Heart left ventricle (tissue), 16 donors: ENCODE measurements at regions of chr6 and their contacts with region 1.

Region 1: DNA sequence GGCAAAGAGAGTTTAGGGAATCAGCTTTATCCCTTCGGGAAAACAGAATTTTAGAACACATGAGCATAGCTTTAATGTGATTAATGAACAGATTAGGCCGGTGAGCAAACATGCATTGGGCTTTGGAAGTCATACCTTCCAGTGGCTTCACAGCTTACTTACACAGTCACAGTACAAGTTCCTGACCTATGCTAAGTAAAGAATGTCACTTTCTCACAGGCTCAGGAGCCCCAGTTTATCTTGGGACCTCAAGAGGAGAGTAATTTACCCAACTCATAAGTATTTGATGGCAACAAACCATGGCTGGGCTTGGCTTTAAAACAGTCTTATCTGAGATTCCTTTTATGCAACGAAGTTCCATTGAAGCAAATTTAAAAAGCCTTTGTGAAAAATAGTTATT is 195.9 kb downstream of the AKAP7 start:
- DNase-seq: no peak
- ATAC-seq: no peak
- H3K4me3 ChIP-seq: no peak overlapping the region
- H3K27ac ChIP-seq: no peak overlapping the region
- H3K4me1 ChIP-seq: no peaks in the 10 kb centered on the region
- H3K27me3 ChIP-seq: no peaks in the 10 kb centered on the region
- CTCF ChIP-seq: no peak
- POLR2A ChIP-seq: no peak

Region 2: GRCh38 chr6:131231103-131231502 is 100.0 kb before region 1 on chr6:
- intact Hi-C with region 1: no loop called
- DNase-seq: no peak
- ATAC-seq: no peak
- H3K4me3 ChIP-seq: no peak overlapping the region
- H3K27ac ChIP-seq: no peak overlapping the region
- H3K4me1 ChIP-seq: no peaks in the 10 kb centered on the region
- H3K27me3 ChIP-seq: no peaks in the 10 kb centered on the region
- CTCF ChIP-seq: no peak
- POLR2A ChIP-seq: no peak

Region 3: GRCh38 chr6:131451321-131452144 is 120.4 kb after region 1 on chr6:
- intact Hi-C with region 1: loop called in 1 of 10 experiments (anchors 10 kb)
- DNase-seq: no peak
- ATAC-seq: no peak
- H3K4me3 ChIP-seq: no peak overlapping the region
- H3K27ac ChIP-seq: no peak overlapping the region
- H3K4me1 ChIP-seq: no peaks in the 10 kb centered on the region
- H3K27me3 ChIP-seq: no peaks in the 10 kb centered on the region
- CTCF ChIP-seq: no peak
- POLR2A ChIP-seq: no peak

Region 4: GRCh38 chr6:131532580-131533039 is 201.5 kb after region 1 on chr6:
- intact Hi-C with region 1: no loop called
- DNase-seq: no peak
- ATAC-seq: no peak
- H3K4me3 ChIP-seq: no peak overlapping the region
- H3K27ac ChIP-seq: no peak overlapping the region
- H3K4me1 ChIP-seq: no peaks in the 10 kb centered on the region
- H3K27me3 ChIP-seq: no peaks in the 10 kb centered on the region
- CTCF ChIP-seq: no peak
- POLR2A ChIP-seq: no peak

Region 5: DNA sequence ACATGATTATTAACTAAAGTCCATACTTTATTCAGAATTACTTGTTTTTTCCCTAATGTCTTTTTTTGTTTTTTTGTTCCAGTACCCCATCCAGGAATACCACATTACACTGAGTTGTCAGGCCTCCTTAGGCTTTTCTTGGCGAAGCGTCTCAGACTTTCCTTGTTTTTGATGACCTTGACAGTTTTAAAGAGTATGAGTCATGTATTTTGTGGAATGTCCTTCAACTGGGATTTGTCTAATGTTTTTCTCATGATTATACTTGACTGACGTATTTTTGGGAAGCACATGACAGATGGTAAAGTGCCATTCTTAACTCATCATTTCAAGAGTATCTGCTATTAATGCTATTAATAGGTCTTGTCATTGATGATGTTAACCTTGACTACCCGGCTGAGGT is 500.2 kb after region 1 on chr6:
- intact Hi-C with region 1: no loop called
- DNase-seq: no peak
- ATAC-seq: peak in 1 of 4 donors; percentile 41
- H3K4me3 ChIP-seq: no peak overlapping the region
- H3K27ac ChIP-seq: peak overlapping the region in 1 of 12 donors; percentile 50
- H3K4me1 ChIP-seq: peaks cover 0 to 10% (median 0%) of the 10 kb centered on the region in 12 donors
- H3K27me3 ChIP-seq: no peaks in the 10 kb centered on the region
- CTCF ChIP-seq: no peak
- POLR2A ChIP-seq: no peak